WTC11 (cell line): ENCODE measurements at regions of chr12 and their contacts with region 1.

Region 1: DNA sequence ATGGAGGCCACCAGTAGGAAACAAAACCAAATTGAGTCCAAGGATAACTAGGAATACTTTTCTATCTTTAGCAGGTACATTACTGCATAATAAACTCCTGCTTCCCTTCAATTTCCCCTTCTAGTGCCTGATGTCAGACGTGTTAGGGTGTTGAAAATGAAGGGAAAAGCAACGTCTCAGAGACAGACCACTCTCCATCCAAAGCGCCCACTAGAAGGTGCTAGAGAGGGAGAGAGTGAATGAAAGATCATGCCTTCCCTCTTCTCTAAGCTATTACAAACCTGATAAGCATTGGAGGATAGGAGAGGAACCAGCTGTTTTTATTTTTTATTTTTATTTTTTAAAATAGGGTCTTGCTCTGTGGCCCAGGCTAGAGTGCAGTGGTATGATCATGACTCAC is 64.1 kb downstream of the ZNF641 start:
- DNase-seq: peak; percentile 38
- ATAC-seq: peak; percentile 84
- H3K4me3 Mint-ChIP-seq: no peak overlapping the region
- H3K27ac Mint-ChIP-seq: no peak overlapping the region
- H3K4me1 Mint-ChIP-seq: peaks cover 3% of the 10 kb centered on the region; the same call in 1 of the 2 replicates
- H3K27me3 Mint-ChIP-seq: peaks cover 83% of the 10 kb centered on the region
- CTCF ChIP-seq: no peak; the same call in 1 of the 2 replicates

Region 2: GRCh38 chr12:48197971-48198671 is 88.5 kb before region 1 on chr12:
- CTCF ChIA-PET with region 1: interaction called, 19 read pairs
- POLR2A ChIA-PET with region 1: no interaction called
- DNase-seq: peak; percentile 97
- ATAC-seq: peak; percentile 96
- H3K4me3 Mint-ChIP-seq: peak overlapping the region; percentile 78
- H3K27ac Mint-ChIP-seq: peak overlapping the region; percentile 97
- H3K4me1 Mint-ChIP-seq: 0 out of 2 replicates have a peak, but pooled peaks cover 7% of the 10 kb centered on the region
- H3K27me3 Mint-ChIP-seq: peaks cover 78% of the 10 kb centered on the region
- CTCF ChIP-seq: no peak

Region 3: GRCh38 chr12:48276621-48277020 is 10.0 kb before region 1 on chr12:
- CTCF ChIA-PET with region 1: no interaction called
- POLR2A ChIA-PET with region 1: no interaction called
- DNase-seq: no peak
- ATAC-seq: no peak
- H3K4me3 Mint-ChIP-seq: no peak overlapping the region
- H3K27ac Mint-ChIP-seq: no peak overlapping the region
- H3K4me1 Mint-ChIP-seq: peaks cover 13% of the 10 kb centered on the region
- H3K27me3 Mint-ChIP-seq: peaks cover 91% of the 10 kb centered on the region
- CTCF ChIP-seq: no peak

Region 4: GRCh38 chr12:48296586-48297282 is 10.1 kb after region 1 on chr12:
- CTCF ChIA-PET with region 1: interaction called, 19 read pairs
- POLR2A ChIA-PET with region 1: interaction called, 3 read pairs
- DNase-seq: peak; percentile 83
- ATAC-seq: peak; percentile 100
- H3K4me3 Mint-ChIP-seq: peak overlapping the region; percentile 71
- H3K27ac Mint-ChIP-seq: no peak overlapping the region; the same call in 1 of the 2 replicates
- H3K4me1 Mint-ChIP-seq: peaks cover 2% of the 10 kb centered on the region
- H3K27me3 Mint-ChIP-seq: peaks cover 49% of the 10 kb centered on the region
- CTCF ChIP-seq: no peak